MCF 10A (cell line): ENCODE measurements at regions of chr5 and their contacts with region 1.

Region 1: DNA sequence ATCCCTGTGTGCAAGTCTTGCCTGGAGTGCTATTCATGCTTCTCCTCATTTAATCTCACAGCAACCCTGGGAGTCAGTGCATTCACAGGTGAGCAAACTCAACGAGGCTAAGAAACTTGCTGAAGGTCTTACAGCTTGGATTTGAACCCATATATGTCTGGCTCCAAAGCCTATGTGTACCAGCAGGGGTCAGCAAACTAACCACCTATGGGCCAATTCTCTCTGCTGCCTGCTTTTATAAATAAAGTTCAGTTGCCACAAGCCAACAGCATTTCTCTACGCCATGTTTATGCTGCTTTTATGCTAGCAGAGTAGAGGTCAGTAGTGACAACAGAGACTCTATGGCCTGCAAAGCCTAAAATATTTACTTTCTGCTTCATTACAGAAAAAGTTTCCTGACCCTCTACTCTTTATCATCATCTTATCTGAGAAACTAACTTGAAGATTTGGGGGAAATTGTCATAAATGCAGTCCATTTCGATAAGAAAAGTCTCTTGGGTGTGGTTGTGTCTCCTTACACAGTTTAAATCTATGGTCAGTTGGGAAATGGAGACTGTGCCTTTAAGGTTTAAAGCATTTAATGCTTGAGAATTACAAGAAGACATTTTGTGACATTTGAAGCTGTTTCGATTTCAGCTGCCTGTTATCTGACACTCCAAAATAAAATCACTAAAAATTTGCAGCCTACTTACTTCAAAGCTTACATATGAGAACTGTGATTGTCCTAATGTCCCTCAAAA is 137.7 kb downstream of the PRELID2 start:
- DNase-seq: peak; percentile 75
- H3K4me3 Mint-ChIP-seq: no peak overlapping the region
- H3K27ac Mint-ChIP-seq: no peak overlapping the region
- H3K4me1 Mint-ChIP-seq: no peaks in the 10 kb centered on the region
- H3K27me3 Mint-ChIP-seq: no peaks in the 10 kb centered on the region
- CTCF ChIP-seq: peak; percentile 68

Region 2: GRCh38 chr5:145408048-145408341 is 289.4 kb before region 1 on chr5:
- CTCF ChIA-PET with region 1: no interaction called
- POLR2A ChIA-PET with region 1: no interaction called
- intact Hi-C with region 1: no loop called
- DNase-seq: no peak
- H3K4me3 Mint-ChIP-seq: no peak overlapping the region
- H3K27ac Mint-ChIP-seq: no peak overlapping the region
- H3K4me1 Mint-ChIP-seq: peaks cover 6% of the 10 kb centered on the region
- H3K27me3 Mint-ChIP-seq: no peaks in the 10 kb centered on the region
- CTCF ChIP-seq: no peak

Region 3: GRCh38 chr5:145681686-145682085 is 15.7 kb before region 1 on chr5:
- CTCF ChIA-PET with region 1: interaction called, 32 read pairs
- POLR2A ChIA-PET with region 1: no interaction called
- intact Hi-C with region 1: no loop called
- DNase-seq: peak; percentile 94
- H3K4me3 Mint-ChIP-seq: no peak overlapping the region
- H3K27ac Mint-ChIP-seq: no peak overlapping the region
- H3K4me1 Mint-ChIP-seq: no peaks in the 10 kb centered on the region
- H3K27me3 Mint-ChIP-seq: no peaks in the 10 kb centered on the region
- CTCF ChIP-seq: peak; percentile 87

Region 4: GRCh38 chr5:145711417-145711816 is 14.0 kb after region 1 on chr5:
- CTCF ChIA-PET with region 1: interaction called, 10 read pairs
- POLR2A ChIA-PET with region 1: interaction called, 4 read pairs
- intact Hi-C with region 1: no loop called
- DNase-seq: no peak
- H3K4me3 Mint-ChIP-seq: no peak overlapping the region
- H3K27ac Mint-ChIP-seq: no peak overlapping the region
- H3K4me1 Mint-ChIP-seq: no peaks in the 10 kb centered on the region
- H3K27me3 Mint-ChIP-seq: no peaks in the 10 kb centered on the region
- CTCF ChIP-seq: no peak

Region 5: GRCh38 chr5:145801195-145801594 is 103.8 kb after region 1 on chr5:
- CTCF ChIA-PET with region 1: no interaction called
- POLR2A ChIA-PET with region 1: no interaction called
- intact Hi-C with region 1: no loop called
- DNase-seq: peak; percentile 81
- H3K4me3 Mint-ChIP-seq: no peak overlapping the region
- H3K27ac Mint-ChIP-seq: no peak overlapping the region
- H3K4me1 Mint-ChIP-seq: peaks cover 20% of the 10 kb centered on the region
- H3K27me3 Mint-ChIP-seq: no peaks in the 10 kb centered on the region
- CTCF ChIP-seq: no peak

Region 6: DNA sequence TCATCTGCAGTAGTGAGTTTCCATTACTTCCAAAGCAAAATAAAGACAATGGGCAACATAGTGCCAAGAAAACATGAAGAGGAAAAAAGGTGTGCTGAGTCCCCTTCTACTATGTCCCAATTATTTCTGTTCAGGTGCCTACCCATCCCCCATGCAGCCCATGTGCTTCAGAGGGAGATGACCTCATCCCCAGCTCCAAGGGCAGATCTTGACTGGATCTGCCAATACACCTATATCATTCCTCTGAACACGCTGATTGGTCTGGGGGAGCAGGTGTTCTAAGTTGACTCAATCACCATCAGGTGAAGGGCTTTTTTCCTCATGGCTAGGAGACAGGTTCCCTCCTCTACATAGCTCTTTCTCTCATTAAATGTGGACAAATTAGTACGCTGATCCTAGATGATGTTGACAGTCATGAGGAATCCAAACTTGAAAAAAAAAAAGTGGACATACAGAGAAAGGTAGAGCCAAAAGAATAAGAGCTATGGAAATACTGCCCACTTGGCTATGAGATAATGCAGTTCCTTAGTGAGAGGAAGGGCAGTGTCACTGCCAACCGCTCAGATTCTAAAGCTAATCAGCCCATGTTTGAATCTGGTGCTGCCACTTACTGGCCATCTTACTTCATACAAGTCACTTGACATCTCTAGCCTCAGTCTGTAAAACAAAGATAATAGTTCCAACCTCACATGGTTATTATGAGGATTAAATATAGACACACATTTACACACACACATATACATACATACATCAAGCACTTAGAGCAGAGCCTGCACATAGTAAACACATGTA is 114.6 kb after region 1 on chr5:
- CTCF ChIA-PET with region 1: interaction called, 6 read pairs
- POLR2A ChIA-PET with region 1: no interaction called
- intact Hi-C with region 1: loop called (anchors 1 kb)
- DNase-seq: peak; percentile 60
- H3K4me3 Mint-ChIP-seq: no peak overlapping the region
- H3K27ac Mint-ChIP-seq: no peak overlapping the region
- H3K4me1 Mint-ChIP-seq: no peaks in the 10 kb centered on the region
- H3K27me3 Mint-ChIP-seq: no peaks in the 10 kb centered on the region
- CTCF ChIP-seq: peak; percentile 45